ENCODE measurements at regions of chr2 and their contacts with region 1.

Region 1: DNA sequence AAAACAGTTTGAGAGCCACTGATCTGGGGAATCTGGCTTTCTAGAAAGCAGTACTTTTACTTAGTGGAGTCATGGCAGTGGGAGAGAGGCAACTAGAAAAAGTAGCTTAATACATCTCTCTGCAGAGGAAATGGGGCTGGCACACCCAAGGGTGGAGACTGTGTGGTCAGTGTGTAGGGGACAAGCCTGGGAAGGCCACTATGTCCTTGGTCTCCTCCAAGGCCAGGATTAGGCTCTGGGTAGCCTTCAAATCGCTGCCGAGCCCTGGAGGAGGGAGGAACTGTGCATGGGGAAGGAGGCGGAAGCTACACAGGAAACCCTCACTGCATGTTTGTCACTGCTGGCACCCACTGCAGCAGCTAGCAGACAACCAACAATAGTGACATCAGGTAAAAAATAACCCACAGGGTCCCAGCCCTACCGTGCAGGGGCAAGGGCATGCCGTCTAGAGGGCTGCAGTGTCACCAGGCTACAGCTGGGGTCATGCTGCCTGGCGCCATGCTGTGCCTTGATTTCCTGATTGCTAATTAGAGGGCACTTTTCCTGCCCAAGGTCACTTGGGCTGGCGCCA is 34.8 kb downstream of the LBH start:
- DNase-seq: peak; percentile 68 to 89 (median 75)
- H3K4me3 ChIP-seq: peak overlapping the region; percentile 34 to 44
- H3K4me3 Mint-ChIP-seq: peak overlapping the region; percentile 86 to 96 (median 90)
- H3K27ac ChIP-seq: peak overlapping the region; percentile 66
- H3K27ac Mint-ChIP-seq: peak overlapping the region; percentile 92 to 99 (median 98)
- H3K4me1 ChIP-seq: peaks cover 70% of the 10 kb centered on the region
- H3K4me1 Mint-ChIP-seq: peaks cover 46 to 84% (median 72%) of the 10 kb centered on the region in 4 donors
- H3K27me3 ChIP-seq: no peaks in the 10 kb centered on the region
- H3K27me3 Mint-ChIP-seq: no peaks in the 10 kb centered on the region

Region 2: GRCh38 chr2:29374823-29375222 is 891.3 kb before region 1 on chr2:
- CTCF ChIA-PET with region 1: no interaction called
- POLR2A ChIA-PET with region 1: no interaction called
- intact Hi-C with region 1: no loop called
- DNase-seq: no peak
- H3K4me3 ChIP-seq: no peak overlapping the region
- H3K4me3 Mint-ChIP-seq: no peak overlapping the region
- H3K27ac ChIP-seq: no peak overlapping the region
- H3K27ac Mint-ChIP-seq: no peak overlapping the region
- H3K4me1 ChIP-seq: no peaks in the 10 kb centered on the region
- H3K4me1 Mint-ChIP-seq: no peaks in the 10 kb centered on the region
- H3K27me3 ChIP-seq: no peaks in the 10 kb centered on the region
- H3K27me3 Mint-ChIP-seq: peaks cover 5 to 10% of the 10 kb centered on the region in 2 donors

Region 3: GRCh38 chr2:30225131-30225762 is 40.9 kb before region 1 on chr2:
- CTCF ChIA-PET with region 1: interaction called, 6 read pairs
- POLR2A ChIA-PET with region 1: interaction called, 435 read pairs
- intact Hi-C with region 1: no loop called
- DNase-seq: peak; percentile 63 to 75 (median 67)
- H3K4me3 ChIP-seq: peak overlapping the region; percentile 54 to 79
- H3K4me3 Mint-ChIP-seq: peak overlapping the region; percentile 88 to 99 (median 94)
- H3K27ac ChIP-seq: peak overlapping the region; percentile 95
- H3K27ac Mint-ChIP-seq: peak overlapping the region; percentile 96 to 100 (median 99)
- H3K4me1 ChIP-seq: peaks cover 75% of the 10 kb centered on the region
- H3K4me1 Mint-ChIP-seq: peaks cover 55 to 84% (median 70%) of the 10 kb centered on the region in 4 donors
- H3K27me3 ChIP-seq: no peaks in the 10 kb centered on the region
- H3K27me3 Mint-ChIP-seq: no peaks in the 10 kb centered on the region

Region 4: GRCh38 chr2:30239308-30239985 is 26.7 kb before region 1 on chr2:
- CTCF ChIA-PET with region 1: interaction called, 81 read pairs
- POLR2A ChIA-PET with region 1: interaction called, 435 read pairs
- intact Hi-C with region 1: no loop called
- DNase-seq: peak; percentile 76 to 80 (median 77)
- H3K4me3 ChIP-seq: peak overlapping the region in 1 of 2 donors; percentile 22
- H3K4me3 Mint-ChIP-seq: peak overlapping the region; percentile 76 to 99 (median 87)
- H3K27ac ChIP-seq: peak overlapping the region; percentile 6
- H3K27ac Mint-ChIP-seq: peak overlapping the region; percentile 71 to 90 (median 83)
- H3K4me1 ChIP-seq: peaks cover 90% of the 10 kb centered on the region
- H3K4me1 Mint-ChIP-seq: peaks cover 72 to 94% (median 82%) of the 10 kb centered on the region in 4 donors
- H3K27me3 ChIP-seq: no peaks in the 10 kb centered on the region
- H3K27me3 Mint-ChIP-seq: no peaks in the 10 kb centered on the region

Region 5: GRCh38 chr2:30282086-30282485 is 15.9 kb after region 1 on chr2:
- CTCF ChIA-PET with region 1: interaction called, 5 read pairs
- POLR2A ChIA-PET with region 1: interaction called, 11 read pairs
- intact Hi-C with region 1: no loop called
- DNase-seq: no peak
- H3K4me3 ChIP-seq: no peak overlapping the region
- H3K4me3 Mint-ChIP-seq: no peak overlapping the region
- H3K27ac ChIP-seq: no peak overlapping the region
- H3K27ac Mint-ChIP-seq: no peak overlapping the region
- H3K4me1 ChIP-seq: peaks cover 2% of the 10 kb centered on the region
- H3K4me1 Mint-ChIP-seq: peaks cover 6 to 13% (median 8%) of the 10 kb centered on the region in 4 donors
- H3K27me3 ChIP-seq: no peaks in the 10 kb centered on the region
- H3K27me3 Mint-ChIP-seq: no peaks in the 10 kb centered on the region

Region 6: GRCh38 chr2:30421604-30422443 is 155.7 kb after region 1 on chr2:
- CTCF ChIA-PET with region 1: interaction called, 3 read pairs
- POLR2A ChIA-PET with region 1: interaction called, 13 read pairs
- intact Hi-C with region 1: loop called (anchors 5 kb)
- DNase-seq: peak in 4 of 5 donors; percentile 16 to 58 (median 26)
- H3K4me3 ChIP-seq: no peak overlapping the region
- H3K4me3 Mint-ChIP-seq: peak overlapping the region; percentile 23 to 74 (median 61)
- H3K27ac ChIP-seq: peak overlapping the region; percentile 40
- H3K27ac Mint-ChIP-seq: peak overlapping the region; percentile 68 to 93 (median 84)
- H3K4me1 ChIP-seq: peaks cover 33% of the 10 kb centered on the region
- H3K4me1 Mint-ChIP-seq: peaks cover 26 to 47% (median 31%) of the 10 kb centered on the region in 4 donors
- H3K27me3 ChIP-seq: no peaks in the 10 kb centered on the region
- H3K27me3 Mint-ChIP-seq: no peaks in the 10 kb centered on the region

Region 7: DNA sequence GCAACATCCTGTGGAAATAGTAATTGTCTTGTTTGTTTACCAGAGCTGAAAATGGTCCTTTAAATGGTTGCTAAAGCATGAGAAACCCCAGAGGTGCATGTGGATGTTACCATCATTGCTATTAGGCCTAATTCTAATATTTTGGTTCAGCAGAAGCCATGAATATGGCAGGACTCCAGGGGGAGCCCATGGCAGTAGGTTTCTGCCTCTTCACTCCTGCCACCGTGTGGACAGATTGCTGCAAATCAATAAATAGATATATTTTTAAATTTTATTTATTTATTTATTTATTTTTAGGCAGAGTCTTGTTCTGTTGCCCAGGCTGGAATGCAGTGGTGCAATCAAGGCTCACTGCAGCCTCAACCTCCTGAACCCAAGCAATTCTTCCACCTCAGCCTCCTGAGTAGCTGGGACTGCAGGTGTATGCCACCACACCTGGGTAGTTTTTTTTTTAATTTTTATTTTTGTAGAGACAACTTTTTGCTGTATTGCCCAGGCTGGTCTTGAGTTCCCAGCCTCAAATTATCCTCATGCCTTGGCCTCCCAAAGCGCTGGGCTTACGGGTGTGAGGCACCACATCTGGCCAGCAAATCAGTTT is 596.0 kb after region 1 on chr2:
- CTCF ChIA-PET with region 1: no interaction called
- POLR2A ChIA-PET with region 1: no interaction called
- intact Hi-C with region 1: no loop called
- DNase-seq: peak; percentile 32 to 51 (median 42)
- H3K4me3 ChIP-seq: no peak overlapping the region
- H3K4me3 Mint-ChIP-seq: no peak overlapping the region
- H3K27ac ChIP-seq: no peak overlapping the region
- H3K27ac Mint-ChIP-seq: no peak overlapping the region
- H3K4me1 ChIP-seq: no peaks in the 10 kb centered on the region
- H3K4me1 Mint-ChIP-seq: peaks cover 4 to 12% (median 6%) of the 10 kb centered on the region in 4 donors
- H3K27me3 ChIP-seq: no peaks in the 10 kb centered on the region
- H3K27me3 Mint-ChIP-seq: peaks cover 3 to 6% of the 10 kb centered on the region in 2 donors